Endothelial cell of umbilical vein (primary cell): ENCODE measurements at regions of chr4 and their contacts with region 1.

Region 1: DNA sequence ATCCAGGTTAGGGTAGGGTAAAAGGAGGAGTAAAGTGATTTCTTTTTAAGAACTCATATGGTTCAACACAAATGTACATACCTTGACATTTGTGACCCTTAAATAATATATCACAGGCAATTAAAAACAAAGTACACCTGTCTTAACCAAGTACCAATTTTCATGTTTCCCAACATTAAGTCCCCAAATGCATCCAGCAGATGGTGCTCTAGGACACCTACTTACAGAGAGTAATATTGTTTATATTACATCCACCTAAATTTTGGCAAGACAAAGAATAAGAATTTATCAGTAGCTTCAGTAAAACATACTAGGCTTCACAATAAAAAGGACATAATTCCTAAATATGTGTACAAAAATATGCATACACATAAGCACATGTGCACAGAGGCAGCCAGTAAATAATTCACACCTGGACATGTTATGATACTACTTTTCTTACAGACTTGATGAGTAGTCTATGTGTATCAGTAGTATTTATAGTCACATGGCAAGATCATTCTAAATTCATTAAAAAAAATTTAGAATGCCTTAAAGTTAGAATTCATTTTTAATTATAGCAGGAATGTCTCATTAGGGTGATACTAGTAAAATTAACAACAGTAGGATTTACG is 219.7 kb downstream of the DCLK2 start:
- DNase-seq: peak; percentile 79
- H3K4me3 ChIP-seq: no peak overlapping the region
- H3K27ac ChIP-seq: no peak overlapping the region
- H3K4me1 ChIP-seq: peaks cover 12% of the 10 kb centered on the region
- H3K27me3 ChIP-seq: no peaks in the 10 kb centered on the region
- CTCF ChIP-seq: peak; percentile 29 to 35
- POLR2A ChIP-seq: no peak

Region 2: DNA sequence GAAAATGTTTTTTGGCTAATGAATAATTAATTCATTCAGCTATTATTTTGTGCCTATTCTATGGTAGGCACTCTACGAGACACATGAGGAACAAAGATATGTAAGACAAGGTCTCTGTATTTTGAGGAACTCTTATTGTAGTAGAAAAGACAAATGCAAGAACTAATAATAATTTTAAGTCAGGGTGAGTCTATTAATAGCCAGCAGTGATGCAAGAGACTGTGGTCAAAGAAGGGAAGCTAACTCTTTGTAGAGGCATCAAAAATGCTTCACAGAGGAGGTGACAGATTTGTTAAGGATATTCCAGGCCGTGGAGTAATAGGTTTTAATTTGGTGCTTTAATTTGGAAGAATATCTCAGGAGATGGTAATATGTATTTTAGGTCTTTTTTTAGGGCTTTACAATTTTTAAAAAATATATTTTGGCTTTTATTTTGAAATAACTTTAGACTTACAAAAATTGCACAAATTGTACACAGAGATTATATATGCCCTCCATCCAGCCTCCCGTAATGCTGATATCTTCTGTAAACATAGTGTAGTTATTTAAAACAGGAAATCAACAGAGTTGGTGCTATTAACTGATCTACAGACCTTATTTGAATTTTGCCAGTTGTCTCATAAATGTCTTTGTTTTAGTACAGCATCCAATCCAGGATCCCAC is 171.6 kb before region 1 on chr4:
- CTCF ChIA-PET with region 1: no interaction called
- POLR2A ChIA-PET with region 1: no interaction called
- dilution Hi-C with region 1: no loop called
- intact Hi-C with region 1: no loop called
- DNase-seq: no peak
- H3K4me3 ChIP-seq: no peak overlapping the region
- H3K27ac ChIP-seq: peak overlapping the region; percentile 48
- H3K4me1 ChIP-seq: peaks cover 13% of the 10 kb centered on the region
- H3K27me3 ChIP-seq: no peaks in the 10 kb centered on the region
- CTCF ChIP-seq: no peak
- POLR2A ChIP-seq: no peak

Region 3: DNA sequence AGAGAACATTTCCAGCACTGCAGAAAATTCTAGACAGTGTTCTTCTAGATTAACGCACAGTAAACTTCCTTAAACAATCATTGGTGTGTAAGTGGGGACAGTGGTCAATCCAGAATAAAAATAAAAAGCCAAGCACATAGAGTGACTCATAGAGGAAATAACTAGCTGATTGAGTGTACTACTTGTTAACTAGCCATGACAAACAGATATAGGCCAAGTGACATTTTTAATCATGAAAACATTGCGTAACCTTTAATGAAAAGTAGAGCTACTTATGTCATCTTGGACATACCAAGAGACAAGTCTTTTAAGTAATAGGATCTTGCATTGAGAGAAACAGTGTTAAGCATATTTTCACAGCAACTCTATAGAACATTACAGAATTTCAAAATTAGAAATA is 50.1 kb after region 1 on chr4:
- CTCF ChIA-PET with region 1: no interaction called
- POLR2A ChIA-PET with region 1: no interaction called
- dilution Hi-C with region 1: no loop called
- intact Hi-C with region 1: loop called (anchors 2 kb)
- DNase-seq: peak; percentile 86
- H3K4me3 ChIP-seq: no peak overlapping the region
- H3K27ac ChIP-seq: peak overlapping the region; percentile 45
- H3K4me1 ChIP-seq: peaks cover 9% of the 10 kb centered on the region
- H3K27me3 ChIP-seq: no peaks in the 10 kb centered on the region
- CTCF ChIP-seq: no peak
- POLR2A ChIP-seq: no peak

Region 4: GRCh38 chr4:150593996-150594395 is 296.0 kb after region 1 on chr4:
- CTCF ChIA-PET with region 1: interaction called, 14 read pairs
- POLR2A ChIA-PET with region 1: no interaction called
- dilution Hi-C with region 1: no loop called
- intact Hi-C with region 1: loop called (anchors 1 kb)
- DNase-seq: peak; percentile 38
- H3K4me3 ChIP-seq: no peak overlapping the region
- H3K27ac ChIP-seq: no peak overlapping the region
- H3K4me1 ChIP-seq: no peaks in the 10 kb centered on the region
- H3K27me3 ChIP-seq: no peaks in the 10 kb centered on the region
- CTCF ChIP-seq: peak in 1 of 2 donors; percentile 9
- POLR2A ChIP-seq: no peak

Region 5: DNA sequence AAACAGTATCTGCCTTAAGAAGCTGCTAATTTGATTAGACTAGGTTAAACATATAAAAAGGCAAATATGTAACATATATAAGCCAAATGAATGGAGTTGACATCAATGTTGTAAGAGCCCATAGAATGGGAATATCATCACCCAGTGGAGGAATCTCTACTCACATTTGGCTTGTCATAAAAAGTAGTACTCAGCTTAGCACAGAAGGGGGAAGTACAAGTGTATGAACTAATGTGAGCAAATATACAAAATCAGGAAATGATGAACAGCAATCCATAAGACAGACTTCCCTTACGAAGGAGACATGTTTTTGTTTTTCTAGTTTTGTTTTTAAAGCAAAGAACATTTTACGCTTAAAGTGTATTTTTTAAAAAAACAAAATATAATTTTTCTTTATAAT is 358.9 kb after region 1 on chr4:
- CTCF ChIA-PET with region 1: interaction called, 4 read pairs
- POLR2A ChIA-PET with region 1: no interaction called
- dilution Hi-C with region 1: no loop called
- intact Hi-C with region 1: loop called (anchors 2 kb)
- DNase-seq: peak; percentile 88
- H3K4me3 ChIP-seq: peak overlapping the region in 1 of 3 experiments; percentile 8
- H3K27ac ChIP-seq: peak overlapping the region; percentile 64
- H3K4me1 ChIP-seq: peaks cover 7% of the 10 kb centered on the region
- H3K27me3 ChIP-seq: no peaks in the 10 kb centered on the region
- CTCF ChIP-seq: no peak
- POLR2A ChIP-seq: no peak

Region 6: DNA sequence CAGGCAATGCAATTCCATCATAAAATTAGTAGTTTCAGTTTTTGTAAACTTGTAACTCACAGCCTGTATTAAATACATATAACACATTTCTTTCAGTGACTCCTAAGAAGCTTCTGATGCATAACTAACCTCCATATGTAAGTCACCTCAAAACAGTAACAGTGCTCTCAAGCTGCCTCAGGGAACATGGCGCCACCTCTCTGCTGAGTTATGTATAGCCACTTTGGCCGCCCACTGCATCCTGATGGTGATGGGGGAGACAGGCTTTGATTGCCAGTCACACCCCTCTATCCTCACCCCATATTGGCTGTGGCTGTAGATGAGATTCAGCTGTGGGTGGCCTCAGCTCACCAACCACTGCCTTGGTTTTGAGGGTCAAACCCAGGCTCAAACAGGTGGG is 662.9 kb after region 1 on chr4:
- CTCF ChIA-PET with region 1: interaction called, 13 read pairs
- POLR2A ChIA-PET with region 1: no interaction called
- dilution Hi-C with region 1: no loop called
- intact Hi-C with region 1: loop called (anchors 2 kb)
- DNase-seq: peak; percentile 46
- H3K4me3 ChIP-seq: no peak overlapping the region
- H3K27ac ChIP-seq: no peak overlapping the region
- H3K4me1 ChIP-seq: peaks cover 22% of the 10 kb centered on the region
- H3K27me3 ChIP-seq: no peaks in the 10 kb centered on the region
- CTCF ChIP-seq: peak; percentile 52 to 57
- POLR2A ChIP-seq: no peak

Region 7: GRCh38 chr4:151045907-151046306 is 747.9 kb after region 1 on chr4:
- CTCF ChIA-PET with region 1: no interaction called
- POLR2A ChIA-PET with region 1: no interaction called
- dilution Hi-C with region 1: no loop called
- intact Hi-C with region 1: loop called (anchors 2 kb)
- DNase-seq: peak; percentile 30
- H3K4me3 ChIP-seq: no peak overlapping the region
- H3K27ac ChIP-seq: no peak overlapping the region
- H3K4me1 ChIP-seq: no peaks in the 10 kb centered on the region
- H3K27me3 ChIP-seq: no peaks in the 10 kb centered on the region
- CTCF ChIP-seq: peak in 1 of 2 donors; percentile 5
- POLR2A ChIP-seq: no peak